ENCODE measurements at regions of chr10 and their contacts with region 1.

Region 1: GRCh38 chr10:73879296-73880173 is 5.2 kb upstream of the CAMK2G start:
- DNase-seq: peak; percentile 90
- H3K4me3 Mint-ChIP-seq: no peak overlapping the region
- H3K27ac Mint-ChIP-seq: peak overlapping the region; percentile 53
- H3K4me1 Mint-ChIP-seq: peaks cover 53% of the 10 kb centered on the region
- H3K27me3 Mint-ChIP-seq: peaks cover 16% of the 10 kb centered on the region

Region 2: GRCh38 chr10:73529089-73529832 is 350.3 kb before region 1 on chr10:
- intact Hi-C with region 1: loop called (anchors 1 kb)
- DNase-seq: peak; percentile 44
- H3K4me3 Mint-ChIP-seq: no peak overlapping the region
- H3K27ac Mint-ChIP-seq: no peak overlapping the region
- H3K4me1 Mint-ChIP-seq: no peaks in the 10 kb centered on the region
- H3K27me3 Mint-ChIP-seq: peaks cover 2% of the 10 kb centered on the region

Region 3: GRCh38 chr10:73772280-73773151 is 107.0 kb before region 1 on chr10:
- intact Hi-C with region 1: loop called (anchors 5 kb)
- DNase-seq: peak; percentile 85
- H3K4me3 Mint-ChIP-seq: peak overlapping the region; percentile 94
- H3K27ac Mint-ChIP-seq: peak overlapping the region; percentile 91
- H3K4me1 Mint-ChIP-seq: peaks cover 67% of the 10 kb centered on the region
- H3K27me3 Mint-ChIP-seq: no peaks in the 10 kb centered on the region

Region 4: GRCh38 chr10:73810735-73811465 is 68.6 kb before region 1 on chr10:
- intact Hi-C with region 1: loop called (anchors 1 kb)
- DNase-seq: peak; percentile 54
- H3K4me3 Mint-ChIP-seq: peak overlapping the region; percentile 97
- H3K27ac Mint-ChIP-seq: peak overlapping the region; percentile 98
- H3K4me1 Mint-ChIP-seq: peaks cover 50% of the 10 kb centered on the region
- H3K27me3 Mint-ChIP-seq: no peaks in the 10 kb centered on the region

Region 5: GRCh38 chr10:73940634-73941221 is 61.2 kb after region 1 on chr10:
- intact Hi-C with region 1: loop called (anchors 2 kb)
- DNase-seq: peak; percentile 80
- H3K4me3 Mint-ChIP-seq: no peak overlapping the region
- H3K27ac Mint-ChIP-seq: no peak overlapping the region
- H3K4me1 Mint-ChIP-seq: peaks cover 24% of the 10 kb centered on the region
- H3K27me3 Mint-ChIP-seq: peaks cover 15% of the 10 kb centered on the region

Region 6: DNA sequence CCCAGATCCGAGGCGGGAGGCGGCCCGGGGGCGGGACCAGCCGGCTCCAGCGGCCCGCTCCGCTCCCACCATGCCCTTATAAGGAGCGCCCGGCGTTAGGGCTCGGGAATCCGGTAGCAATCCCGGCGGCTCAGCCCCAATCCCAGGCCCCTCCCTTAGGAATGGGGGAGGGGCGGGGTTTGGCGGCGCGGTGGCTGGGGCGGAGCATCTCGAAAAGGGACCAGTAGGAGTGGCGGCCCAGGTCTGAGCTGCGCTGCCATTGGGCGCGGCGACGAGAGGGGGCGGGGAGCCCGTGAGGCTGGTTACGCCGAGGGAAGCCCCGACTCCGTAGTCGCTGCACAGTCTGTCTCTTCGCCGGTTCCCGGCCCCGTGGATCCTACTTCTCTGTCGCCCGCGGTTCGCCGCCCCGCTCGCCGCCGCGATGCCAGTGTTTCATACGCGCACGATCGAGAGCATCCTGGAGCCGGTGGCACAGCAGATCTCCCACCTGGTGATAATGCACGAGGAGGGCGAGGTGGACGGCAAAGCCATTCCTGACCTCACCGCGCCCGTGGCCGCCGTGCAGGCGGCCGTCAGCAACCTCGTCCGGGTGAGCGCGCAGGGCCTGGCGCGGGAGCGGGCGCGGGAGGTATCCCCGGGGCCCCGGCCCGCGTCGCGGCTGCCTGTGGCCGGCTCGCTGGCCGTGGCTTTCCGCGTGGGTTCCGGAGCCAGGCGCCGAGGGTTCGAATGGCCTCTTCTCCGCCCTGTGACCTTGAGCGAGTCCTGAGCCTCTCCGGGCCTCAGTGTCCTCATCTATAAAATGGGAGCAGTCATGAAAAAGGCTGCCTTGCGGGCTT is 118.5 kb after region 1 on chr10 and contains the start of gene VCL:
- intact Hi-C with region 1: loop called (anchors 2 kb)
- DNase-seq: peak; percentile 95
- H3K4me3 Mint-ChIP-seq: peak within 1 kb of the TSS; percentile 98
- H3K27ac Mint-ChIP-seq: peak within 1 kb of the TSS; percentile 100
- H3K4me1 Mint-ChIP-seq: peaks cover 59% of the 10 kb centered on the region
- H3K27me3 Mint-ChIP-seq: no peaks in the 10 kb centered on the region
- total RNA-seq, gene VCL: 24.4 and 26.0 TPM in 2 replicates

Measured in activated T-helper 1 cell treated with anti-CD3 and anti-CD28 coated beads, Interleukin-12 subunit alpha, Interleukin-12 subunit beta, Interleukin-2, Interleukin-4 antibody, amounts not matched to agents 30 ng/mL and 10 ng/mL and 1 ng/mL, durations not matched to agents 14 hours and 24 hours and 36 hours (primary cell).